ENCODE measurements at regions of chr14 and their contacts with region 1.

Region 1: GRCh38 chr14:72516936-72517700 is 376.8 kb downstream of the DPF3 start:
- DNase-seq: peak; percentile 22 to 47
- H3K4me3 ChIP-seq: no peak overlapping the region
- H3K27ac ChIP-seq: no peak overlapping the region
- H3K4me1 ChIP-seq: no peaks in the 10 kb centered on the region
- H3K27me3 ChIP-seq: no peaks in the 10 kb centered on the region
- CTCF ChIP-seq: peak; percentile 56 to 83 (median 78)
- POLR2A ChIP-seq: no peak

Region 2: GRCh38 chr14:72904840-72905561 is 387.9 kb after region 1 on chr14:
- intact Hi-C with region 1: loop called (anchors 5 kb)
- DNase-seq: peak; percentile 43 to 53
- H3K4me3 ChIP-seq: no peak overlapping the region
- H3K27ac ChIP-seq: no peak overlapping the region
- H3K4me1 ChIP-seq: no peaks in the 10 kb centered on the region
- H3K27me3 ChIP-seq: no peaks in the 10 kb centered on the region
- CTCF ChIP-seq: peak; percentile 78 to 86 (median 84)
- POLR2A ChIP-seq: no peak